GM12878 (cell line): ENCODE measurements at regions of chr1 and their contacts with region 1.

Region 1: GRCh38 chr1:36864182-36864822 is 170.0 kb downstream of the GRIK3 start:
- DNase-seq: no peak
- ATAC-seq: no peak; the same call in 2 of the 3 replicates
- H3K4me3 ChIP-seq: no peak overlapping the region
- H3K27ac ChIP-seq: no peak overlapping the region
- H3K4me1 ChIP-seq: no peaks in the 10 kb centered on the region
- H3K27me3 ChIP-seq: no peaks in the 10 kb centered on the region; a peak in 3 of 4 replicates
- CTCF ChIP-seq: peak; percentile 41 to 68 (median 56)
- EP300 ChIP-seq: no peak
- POLR2A ChIP-seq: no peak
- RAD21 ChIP-seq: peak; percentile 43

Region 2: GRCh38 chr1:36844917-36845316 is 19.4 kb before region 1 on chr1:
- CTCF ChIA-PET with region 1: no interaction called
- POLR2A ChIA-PET with region 1: no interaction called
- RAD21 ChIA-PET with region 1: no interaction called
- SMC1A ChIA-PET with region 1: no interaction called
- in situ Hi-C with region 1: no loop called
- intact Hi-C with region 1: no loop called
- DNase-seq: no peak
- ATAC-seq: no peak
- H3K4me3 ChIP-seq: no peak overlapping the region
- H3K27ac ChIP-seq: no peak overlapping the region
- H3K4me1 ChIP-seq: no peaks in the 10 kb centered on the region
- H3K27me3 ChIP-seq: no peaks in the 10 kb centered on the region; a peak in 1 of 4 replicates
- CTCF ChIP-seq: no peak
- EP300 ChIP-seq: no peak
- POLR2A ChIP-seq: no peak
- RAD21 ChIP-seq: no peak

Region 3: GRCh38 chr1:36880155-36881067 is 16.1 kb after region 1 on chr1:
- CTCF ChIA-PET with region 1: interaction called, 17 read pairs
- POLR2A ChIA-PET with region 1: interaction called, 3 read pairs
- RAD21 ChIA-PET with region 1: no interaction called
- SMC1A ChIA-PET with region 1: no interaction called
- in situ Hi-C with region 1: no loop called
- intact Hi-C with region 1: no loop called
- DNase-seq: no peak
- ATAC-seq: no peak
- H3K4me3 ChIP-seq: no peak overlapping the region
- H3K27ac ChIP-seq: no peak overlapping the region
- H3K4me1 ChIP-seq: peaks cover 9% of the 10 kb centered on the region
- H3K27me3 ChIP-seq: no peaks in the 10 kb centered on the region; a peak in 1 of 4 replicates
- CTCF ChIP-seq: no peak
- EP300 ChIP-seq: no peak
- POLR2A ChIP-seq: no peak
- RAD21 ChIP-seq: no peak

Region 4: GRCh38 chr1:37549341-37549740 is 685.0 kb after region 1 on chr1:
- CTCF ChIA-PET with region 1: no interaction called
- POLR2A ChIA-PET with region 1: no interaction called
- RAD21 ChIA-PET with region 1: no interaction called
- SMC1A ChIA-PET with region 1: no interaction called
- in situ Hi-C with region 1: no loop called
- intact Hi-C with region 1: no loop called
- DNase-seq: no peak
- ATAC-seq: no peak
- H3K4me3 ChIP-seq: no peak overlapping the region
- H3K27ac ChIP-seq: no peak overlapping the region
- H3K4me1 ChIP-seq: peaks cover 3% of the 10 kb centered on the region; the same call in 1 of the 2 replicates
- H3K27me3 ChIP-seq: no peaks in the 10 kb centered on the region
- CTCF ChIP-seq: no peak
- EP300 ChIP-seq: no peak
- POLR2A ChIP-seq: no peak
- RAD21 ChIP-seq: no peak